ENCODE measurements at regions of chr3 and their contacts with region 1.

Region 1: DNA sequence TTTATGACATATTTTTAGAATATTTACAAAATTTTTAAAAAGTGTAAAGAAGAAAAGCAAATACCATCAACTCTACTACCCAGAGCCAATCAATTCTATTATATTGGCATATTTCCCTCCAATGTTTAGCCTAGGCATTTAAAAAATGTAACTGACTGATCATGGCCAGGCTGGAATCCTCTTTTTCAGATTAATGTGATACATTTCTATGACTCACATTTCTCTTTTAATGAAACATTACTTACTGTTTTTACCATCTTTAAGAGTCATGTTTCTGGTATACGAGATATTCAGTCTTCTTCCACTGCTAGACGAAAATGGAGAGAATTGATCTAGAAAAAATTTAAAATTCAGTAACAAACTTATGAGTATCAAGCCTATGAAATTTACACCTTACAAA is 53.4 kb upstream of the DCUN1D1 start:
- DNase-seq: peak; percentile 21
- H3K4me3 ChIP-seq: no peak overlapping the region
- H3K27me3 ChIP-seq: no peaks in the 10 kb centered on the region
- CTCF ChIP-seq: no peak

Region 2: GRCh38 chr3:182909318-182910040 is 124.3 kb before region 1 on chr3:
- CTCF ChIA-PET with region 1: no interaction called
- POLR2A ChIA-PET with region 1: no interaction called
- DNase-seq: no peak
- H3K4me3 ChIP-seq: no peak overlapping the region
- H3K27me3 ChIP-seq: no peaks in the 10 kb centered on the region
- CTCF ChIP-seq: peak; percentile 42

Region 3: DNA sequence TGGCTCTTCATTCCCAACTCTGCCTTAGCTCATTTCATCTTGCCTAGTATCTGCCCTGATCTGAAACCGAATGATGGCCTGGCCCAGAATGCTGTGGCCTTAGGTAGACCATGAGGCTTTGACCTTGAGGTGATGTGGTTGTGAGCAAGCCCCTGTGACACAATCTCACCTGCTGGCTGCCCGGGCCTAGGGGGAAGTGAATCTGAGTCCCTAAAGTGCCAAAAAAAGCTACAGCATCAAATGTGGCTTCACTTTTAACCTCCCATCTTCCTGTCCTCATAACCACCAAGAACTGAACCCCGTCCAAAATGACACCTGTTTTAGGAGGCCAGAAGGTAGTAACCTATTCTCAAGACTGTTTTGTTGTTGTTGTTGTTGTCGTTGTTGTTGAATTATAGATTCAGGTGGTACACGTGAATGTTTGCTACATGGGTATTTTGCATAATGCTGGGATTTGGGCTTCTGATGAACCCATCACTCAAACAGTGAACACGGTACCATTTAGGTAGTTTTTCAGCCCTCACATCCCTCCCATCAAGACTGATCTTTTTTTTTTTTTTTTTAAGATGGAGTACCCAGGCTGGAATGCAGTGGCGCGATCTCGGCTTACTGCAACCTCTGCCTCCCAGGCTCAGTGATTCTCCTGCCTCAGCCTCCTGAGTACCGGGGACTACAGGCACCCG is 10.9 kb after region 1 on chr3:
- CTCF ChIA-PET with region 1: no interaction called
- POLR2A ChIA-PET with region 1: no interaction called
- DNase-seq: no peak
- H3K4me3 ChIP-seq: no peak overlapping the region
- H3K27me3 ChIP-seq: no peaks in the 10 kb centered on the region
- CTCF ChIP-seq: no peak

Region 4: DNA sequence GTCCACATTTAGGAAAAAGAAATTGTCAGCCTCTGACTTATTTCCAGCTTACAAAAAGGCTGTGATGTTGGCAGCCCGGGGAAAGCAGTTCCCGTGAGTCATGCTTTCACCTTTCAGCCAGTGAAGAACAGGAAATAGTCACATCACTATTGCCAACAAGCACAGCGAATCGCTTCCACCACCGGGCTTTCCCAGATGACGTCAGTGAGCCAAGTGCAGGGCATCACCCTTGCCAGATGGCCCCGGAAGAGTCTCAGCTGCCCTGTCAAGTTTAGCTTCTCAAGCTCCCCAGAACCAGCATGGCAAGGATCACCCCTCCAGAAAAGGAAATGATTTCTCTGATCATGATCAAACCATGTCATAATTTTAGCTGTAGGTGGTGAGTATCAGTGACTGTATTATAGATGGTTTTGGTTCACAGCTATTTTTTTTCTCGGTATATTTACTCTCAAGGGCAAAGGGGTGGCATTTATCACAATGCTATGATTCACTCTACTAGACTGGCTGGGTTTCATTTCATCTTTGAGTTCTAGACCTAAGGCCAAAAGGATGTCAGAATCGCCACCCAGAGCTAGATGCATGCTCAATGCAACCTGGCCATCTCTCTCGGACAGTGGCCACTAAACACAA is 252.2 kb after region 1 on chr3:
- CTCF ChIA-PET with region 1: no interaction called
- POLR2A ChIA-PET with region 1: interaction called, 26 read pairs
- DNase-seq: peak; percentile 62
- H3K4me3 ChIP-seq: no peak overlapping the region
- H3K27me3 ChIP-seq: no peaks in the 10 kb centered on the region
- CTCF ChIP-seq: no peak